GM12878 (cell line): ENCODE measurements at regions of chr2 and their contacts with region 1.

Region 1: DNA sequence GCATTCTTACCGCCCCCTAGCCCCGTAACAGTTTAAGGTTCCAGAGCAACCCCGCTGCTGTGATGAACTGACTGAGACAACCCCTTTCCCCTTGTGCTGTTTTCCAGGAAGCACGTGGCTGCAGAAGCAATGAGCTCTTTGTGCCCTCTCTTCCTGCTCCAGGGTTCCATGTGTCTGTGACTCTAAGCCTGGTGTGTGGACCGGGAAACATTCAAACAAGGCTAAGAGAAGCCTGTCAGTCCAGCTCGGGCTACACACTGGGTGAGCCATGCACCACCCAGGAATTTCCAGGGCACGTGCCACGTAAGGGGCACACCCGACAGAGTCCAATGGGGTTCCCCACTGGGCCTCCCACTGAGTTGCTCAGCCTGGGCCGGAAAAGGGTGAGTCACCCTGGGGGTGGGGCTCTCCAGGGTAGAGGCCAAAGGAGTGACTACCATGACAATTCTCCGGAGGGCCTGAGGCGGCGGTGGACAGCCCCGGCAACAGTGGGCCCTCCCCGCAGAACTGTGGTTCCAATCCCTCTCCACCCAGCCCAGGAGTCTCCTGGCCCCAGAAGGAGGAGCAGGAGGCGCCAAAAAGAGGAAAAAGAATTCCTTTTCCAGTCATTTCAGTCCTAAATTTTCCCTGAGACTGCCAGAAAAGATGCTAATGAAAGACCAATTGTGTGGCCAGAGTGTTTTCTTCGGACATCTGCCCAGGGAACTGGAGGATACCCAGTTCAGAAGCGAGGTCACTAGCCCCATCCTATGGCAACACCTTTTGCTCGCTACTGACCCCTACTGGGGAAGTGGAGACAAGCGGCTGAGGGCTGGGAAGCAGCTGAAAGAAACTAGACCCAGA is 157.8 kb upstream of the SLC1A4 start:
- DNase-seq: peak; percentile 71
- ATAC-seq: peak; percentile 96
- H3K4me3 ChIP-seq: peak overlapping the region; percentile 19; the same call in 1 of the 2 replicates
- H3K27ac ChIP-seq: peak overlapping the region; percentile 80
- H3K4me1 ChIP-seq: peaks cover 12% of the 10 kb centered on the region
- H3K27me3 ChIP-seq: no peaks in the 10 kb centered on the region
- CTCF ChIP-seq: peak; percentile 80 to 99 (median 98)
- EP300 ChIP-seq: 0 out of 4 replicates have a peak, but pooled peaks of 1 of the 2 experiments have one; percentile 10
- POLR2A ChIP-seq: no peak; the same call in none of the 2 replicates
- RAD21 ChIP-seq: peak; percentile 85

Region 2: DNA sequence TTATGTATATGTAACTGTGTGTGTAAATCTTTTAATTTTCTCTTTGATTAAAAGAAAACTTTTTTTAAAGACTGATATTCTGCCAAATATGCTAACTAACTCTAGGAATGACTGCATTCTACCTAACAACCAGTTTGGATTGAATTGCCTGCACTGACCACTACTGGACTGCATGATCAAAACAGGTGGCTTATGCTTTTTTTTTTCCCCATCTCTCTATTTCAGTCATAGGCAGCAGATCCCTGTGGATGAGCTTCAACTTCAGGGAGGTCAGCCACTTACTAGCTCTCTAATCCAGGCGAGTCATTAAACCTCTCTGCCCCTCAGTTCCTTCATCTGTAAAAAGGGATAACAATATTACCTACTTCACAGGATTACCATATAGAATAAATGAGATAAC is 39.0 kb before region 1 on chr2:
- CTCF ChIA-PET with region 1: interaction called, 14 read pairs
- POLR2A ChIA-PET with region 1: interaction called, 5 read pairs
- RAD21 ChIA-PET with region 1: no interaction called
- SMC1A ChIA-PET with region 1: interaction called, 6 read pairs
- in situ Hi-C with region 1: no loop called
- intact Hi-C with region 1: no loop called
- DNase-seq: no peak
- ATAC-seq: peak; percentile 37; the same call in 2 of the 3 replicates
- H3K4me3 ChIP-seq: no peak overlapping the region
- H3K27ac ChIP-seq: no peak overlapping the region
- H3K4me1 ChIP-seq: no peaks in the 10 kb centered on the region
- H3K27me3 ChIP-seq: no peaks in the 10 kb centered on the region
- CTCF ChIP-seq: peak in 1 of 3 experiments; percentile 20; a peak in 1 of 6 replicates
- EP300 ChIP-seq: no peak
- POLR2A ChIP-seq: no peak
- RAD21 ChIP-seq: no peak

Region 3: GRCh38 chr2:64819774-64820696 is 11.3 kb before region 1 on chr2:
- CTCF ChIA-PET with region 1: interaction called, 13 read pairs
- POLR2A ChIA-PET with region 1: interaction called, 8 read pairs
- RAD21 ChIA-PET with region 1: interaction called, 3 read pairs
- SMC1A ChIA-PET with region 1: interaction called, 20 read pairs
- in situ Hi-C with region 1: no loop called
- intact Hi-C with region 1: no loop called
- DNase-seq: peak; percentile 78
- ATAC-seq: peak; percentile 97
- H3K4me3 ChIP-seq: peak overlapping the region; percentile 18; the same call in 1 of the 2 replicates
- H3K27ac ChIP-seq: peak overlapping the region; percentile 75
- H3K4me1 ChIP-seq: peaks cover 25% of the 10 kb centered on the region
- H3K27me3 ChIP-seq: no peaks in the 10 kb centered on the region
- CTCF ChIP-seq: no peak
- EP300 ChIP-seq: no peak
- POLR2A ChIP-seq: 0 out of 2 replicates have a peak, but pooled peaks have one; percentile 21
- RAD21 ChIP-seq: peak; percentile 10; the same call in 1 of the 2 replicates

Region 4: DNA sequence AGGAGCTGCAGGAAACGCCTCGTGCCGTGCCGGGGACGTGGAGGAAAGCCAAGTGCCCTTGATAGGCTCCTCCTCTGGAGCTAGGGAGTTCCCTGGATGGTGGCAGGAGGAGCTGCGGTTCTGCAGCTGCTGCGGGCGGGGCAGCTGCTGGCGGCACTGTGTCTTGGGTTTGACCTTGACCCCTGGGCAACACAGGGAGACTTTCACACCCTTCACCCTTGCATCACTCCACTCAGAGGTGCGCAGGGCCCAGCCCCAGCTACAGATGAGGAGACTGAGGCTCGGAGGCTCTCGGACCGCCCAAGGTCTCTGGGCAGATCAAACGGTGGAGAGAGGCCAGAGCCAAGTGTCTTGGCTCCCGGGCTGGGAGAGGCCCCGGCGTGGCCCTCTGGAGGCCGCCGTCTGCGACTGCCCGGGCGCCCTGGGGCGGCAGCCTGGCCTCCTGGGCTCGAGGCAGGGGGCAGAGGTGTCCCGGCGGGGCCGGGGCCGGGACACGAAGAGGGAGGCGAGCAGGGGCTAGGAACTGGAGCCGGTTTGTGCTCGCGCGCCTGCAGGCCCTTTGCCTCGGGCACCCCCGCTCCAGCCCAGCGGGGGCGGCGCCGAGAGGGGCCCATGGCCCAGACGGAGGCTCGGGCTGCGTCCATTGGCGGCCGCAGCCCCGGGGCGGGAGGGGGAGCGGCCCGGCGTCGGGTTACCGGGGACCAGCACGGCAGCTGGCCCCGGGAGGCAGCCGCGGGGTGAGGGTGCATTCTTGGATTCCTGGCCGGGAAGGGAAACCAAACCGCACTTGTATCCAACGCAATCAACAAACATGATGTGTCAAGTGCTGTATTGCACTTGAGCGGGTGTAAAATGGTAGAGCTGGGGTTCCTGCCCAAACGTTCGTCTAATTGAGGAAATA is 28.2 kb after region 1 on chr2:
- CTCF ChIA-PET with region 1: interaction called, 6 read pairs
- POLR2A ChIA-PET with region 1: interaction called, 3 read pairs
- RAD21 ChIA-PET with region 1: interaction called, 5 read pairs
- SMC1A ChIA-PET with region 1: interaction called, 22 read pairs
- in situ Hi-C with region 1: no loop called
- intact Hi-C with region 1: no loop called
- DNase-seq: no peak
- ATAC-seq: peak; percentile 53
- H3K4me3 ChIP-seq: peak overlapping the region; percentile 65
- H3K27ac ChIP-seq: peak overlapping the region; percentile 91
- H3K4me1 ChIP-seq: peaks cover 54% of the 10 kb centered on the region
- H3K27me3 ChIP-seq: no peaks in the 10 kb centered on the region
- CTCF ChIP-seq: no peak
- EP300 ChIP-seq: no peak
- POLR2A ChIP-seq: peak; percentile 40
- RAD21 ChIP-seq: no peak

Region 5: GRCh38 chr2:64978514-64979268 is 147.3 kb after region 1 on chr2:
- CTCF ChIA-PET with region 1: no interaction called
- POLR2A ChIA-PET with region 1: no interaction called
- RAD21 ChIA-PET with region 1: no interaction called
- SMC1A ChIA-PET with region 1: no interaction called
- in situ Hi-C with region 1: no loop called
- intact Hi-C with region 1: no loop called
- DNase-seq: no peak
- ATAC-seq: peak; percentile 71
- H3K4me3 ChIP-seq: no peak overlapping the region
- H3K27ac ChIP-seq: no peak overlapping the region
- H3K4me1 ChIP-seq: peaks cover 25% of the 10 kb centered on the region
- H3K27me3 ChIP-seq: no peaks in the 10 kb centered on the region
- CTCF ChIP-seq: peak; percentile 29 to 36 (median 31); a peak in 4 of 6 replicates
- EP300 ChIP-seq: no peak
- POLR2A ChIP-seq: no peak
- RAD21 ChIP-seq: peak; percentile 36